A549 (cell line): ENCODE measurements at regions of chr9 and their contacts with region 1.

Region 1: GRCh38 chr9:136339173-136339957 is 12.0 kb downstream of the GPSM1 start:
- DNase-seq: peak; percentile 74 to 79
- ATAC-seq: peak; percentile 67 to 92
- H3K4me3 ChIP-seq: no peak overlapping the region
- H3K27ac ChIP-seq: no peak overlapping the region
- H3K4me1 ChIP-seq: 0 out of 3 replicates have a peak, but pooled peaks cover 3% of the 10 kb centered on the region
- CTCF ChIP-seq: peak; percentile 91
- EP300 ChIP-seq: no peak
- POLR2A ChIP-seq: no peak
- RAD21 ChIP-seq: peak; percentile 68 to 72

Region 2: DNA sequence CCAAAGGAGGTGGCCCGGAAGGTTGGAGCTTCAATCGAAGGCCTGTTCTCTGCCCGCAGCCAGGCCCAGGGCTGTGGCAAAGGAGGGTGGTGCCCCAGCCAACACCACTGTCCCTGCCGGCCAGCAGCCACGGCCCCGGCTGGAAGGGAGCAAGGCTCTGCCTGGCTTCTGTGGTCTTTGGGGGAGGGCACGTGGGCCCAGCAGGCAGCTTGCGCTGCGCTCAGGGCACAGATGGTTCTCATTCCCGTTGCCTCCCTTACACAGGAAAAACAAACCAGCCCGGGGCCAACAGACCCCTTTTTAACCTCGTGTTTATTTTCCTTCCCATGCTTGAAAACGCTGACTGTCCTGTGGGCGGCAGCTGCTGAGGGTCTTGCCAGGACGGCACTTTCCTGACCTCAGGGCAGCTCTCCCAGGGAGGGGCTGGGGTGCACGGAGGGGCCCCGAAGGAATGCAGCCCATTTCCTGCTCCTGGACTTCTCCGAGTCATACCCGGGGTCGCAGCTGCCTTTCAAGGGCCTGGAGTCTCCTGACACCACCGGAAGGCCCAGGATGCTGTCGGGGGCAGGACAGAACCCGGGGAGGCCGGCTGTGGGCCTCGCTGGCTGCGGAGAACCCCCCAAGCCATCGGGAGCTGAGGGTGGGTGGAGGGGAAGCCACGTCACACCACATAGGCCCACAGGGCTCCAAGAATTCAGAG is 13.2 kb before region 1 on chr9:
- CTCF ChIA-PET with region 1: interaction called, 18 read pairs
- POLR2A ChIA-PET with region 1: no interaction called
- DNase-seq: no peak
- ATAC-seq: no peak
- H3K4me3 ChIP-seq: no peak overlapping the region
- H3K27ac ChIP-seq: peak overlapping the region in 1 of 2 experiments; percentile 89; a peak in 4 of 6 replicates
- H3K4me1 ChIP-seq: peaks cover 18% of the 10 kb centered on the region
- CTCF ChIP-seq: no peak
- EP300 ChIP-seq: no peak
- POLR2A ChIP-seq: no peak
- RAD21 ChIP-seq: no peak